Activated CD4-positive, alpha-beta T cell treated with anti-CD3 and anti-CD28 coated beads, Interleukin-2, amount 10 ng/mL, durations not matched to agents 24 days and 14 days (primary cell): ENCODE measurements at regions of chr9 and their contacts with region 1.

Region 1: GRCh38 chr9:79955300-79955699 is 383.5 kb downstream of the TLE4 start:
- DNase-seq: peak; percentile 59
- H3K4me3 Mint-ChIP-seq: no peak overlapping the region
- H3K27ac Mint-ChIP-seq: no peak overlapping the region
- H3K4me1 Mint-ChIP-seq: no peaks in the 10 kb centered on the region
- H3K27me3 Mint-ChIP-seq: no peaks in the 10 kb centered on the region

Region 2: GRCh38 chr9:79129865-79130480 is 825.3 kb before region 1 on chr9:
- intact Hi-C with region 1: loop called (anchors 10 kb)
- DNase-seq: peak; percentile 60
- H3K4me3 Mint-ChIP-seq: no peak overlapping the region
- H3K27ac Mint-ChIP-seq: no peak overlapping the region
- H3K4me1 Mint-ChIP-seq: no peaks in the 10 kb centered on the region
- H3K27me3 Mint-ChIP-seq: no peaks in the 10 kb centered on the region